Activated CD4-positive, alpha-beta T cell treated with anti-CD3 and anti-CD28 coated beads, Interleukin-2, amount 10 ng/mL, durations not matched to agents 7 days and 5 days (primary cell): ENCODE measurements at regions of chr10 and their contacts with region 1.

Region 1: GRCh38 chr10:102461187-102462054 is 10.1 kb upstream of the C10orf95 start:
- DNase-seq: peak; percentile 92
- H3K4me3 Mint-ChIP-seq: peak overlapping the region; percentile 85
- H3K27ac Mint-ChIP-seq: peak overlapping the region; percentile 85
- H3K4me1 Mint-ChIP-seq: peaks cover 31% of the 10 kb centered on the region
- H3K27me3 Mint-ChIP-seq: no peaks in the 10 kb centered on the region

Region 2: GRCh38 chr10:102368072-102368471 is 93.3 kb before region 1 on chr10:
- CTCF ChIA-PET with region 1: interaction called, 3 read pairs
- POLR2A ChIA-PET with region 1: interaction called, 10 read pairs
- DNase-seq: no peak
- H3K4me3 Mint-ChIP-seq: no peak overlapping the region
- H3K27ac Mint-ChIP-seq: no peak overlapping the region
- H3K4me1 Mint-ChIP-seq: no peaks in the 10 kb centered on the region
- H3K27me3 Mint-ChIP-seq: no peaks in the 10 kb centered on the region

Region 3: DNA sequence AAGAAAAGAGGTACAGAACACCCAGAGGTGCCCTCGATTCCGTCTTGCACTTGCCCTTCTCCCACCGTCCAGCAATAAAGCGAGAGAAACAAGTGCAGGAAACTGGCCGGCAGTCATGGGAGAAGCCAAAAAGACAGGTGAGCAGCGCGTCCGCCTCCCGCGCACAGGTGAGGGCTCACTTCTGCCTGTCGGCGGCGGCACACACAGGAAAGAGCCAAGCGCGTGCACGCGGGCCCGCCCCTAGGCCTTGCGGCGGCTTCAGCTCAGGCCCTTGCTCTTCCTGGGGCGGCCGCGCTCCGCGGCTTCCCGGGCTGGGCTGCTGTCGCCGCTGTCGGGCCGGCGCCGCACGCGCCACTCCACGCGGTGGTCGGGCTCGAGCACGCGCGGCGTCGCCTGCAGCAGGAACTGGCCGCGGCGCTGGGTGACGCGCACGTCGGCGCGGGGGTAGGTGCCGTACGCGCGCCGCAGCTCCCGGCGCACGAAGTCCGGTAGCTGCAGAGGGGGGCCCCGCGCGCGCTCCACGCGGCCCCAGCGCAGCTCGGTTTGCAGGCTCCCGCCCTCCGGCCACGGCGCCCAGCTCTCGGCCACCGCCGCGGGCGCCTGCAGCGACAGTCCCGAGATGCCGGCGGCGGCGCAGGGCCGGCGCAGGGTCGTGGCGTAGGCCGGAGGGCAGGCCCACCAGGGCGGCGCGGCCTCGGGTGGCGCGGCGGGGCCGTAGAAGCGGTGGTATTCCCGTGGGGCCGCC is 11.1 kb before region 1 on chr10:
- CTCF ChIA-PET with region 1: interaction called, 37 read pairs
- POLR2A ChIA-PET with region 1: interaction called, 8 read pairs
- DNase-seq: peak; percentile 89
- H3K4me3 Mint-ChIP-seq: peak overlapping the region; percentile 86
- H3K27ac Mint-ChIP-seq: peak overlapping the region; percentile 94
- H3K4me1 Mint-ChIP-seq: peaks cover 45% of the 10 kb centered on the region
- H3K27me3 Mint-ChIP-seq: no peaks in the 10 kb centered on the region

Region 4: GRCh38 chr10:102476466-102477141 is 15.2 kb after region 1 on chr10:
- CTCF ChIA-PET with region 1: interaction called, 11 read pairs
- POLR2A ChIA-PET with region 1: interaction called, 3 read pairs
- DNase-seq: no peak
- H3K4me3 Mint-ChIP-seq: no peak overlapping the region
- H3K27ac Mint-ChIP-seq: peak overlapping the region; percentile 69
- H3K4me1 Mint-ChIP-seq: peaks cover 24% of the 10 kb centered on the region
- H3K27me3 Mint-ChIP-seq: no peaks in the 10 kb centered on the region

Region 5: GRCh38 chr10:102492983-102493382 is 31.6 kb after region 1 on chr10:
- CTCF ChIA-PET with region 1: no interaction called
- POLR2A ChIA-PET with region 1: no interaction called
- DNase-seq: no peak
- H3K4me3 Mint-ChIP-seq: no peak overlapping the region
- H3K27ac Mint-ChIP-seq: peak overlapping the region; percentile 57
- H3K4me1 Mint-ChIP-seq: peaks cover 11% of the 10 kb centered on the region
- H3K27me3 Mint-ChIP-seq: no peaks in the 10 kb centered on the region